Posterior cingulate gyrus (tissue), 11 donors: ENCODE measurements at regions of chrX and their contacts with region 1.

Region 1: GRCh38 chrX:131841496-131842410 is 181.3 kb upstream of the STK26 start:
- DNase-seq: peak in 4 of 10 donors; percentile 3 to 79 (median 14)

Region 2: DNA sequence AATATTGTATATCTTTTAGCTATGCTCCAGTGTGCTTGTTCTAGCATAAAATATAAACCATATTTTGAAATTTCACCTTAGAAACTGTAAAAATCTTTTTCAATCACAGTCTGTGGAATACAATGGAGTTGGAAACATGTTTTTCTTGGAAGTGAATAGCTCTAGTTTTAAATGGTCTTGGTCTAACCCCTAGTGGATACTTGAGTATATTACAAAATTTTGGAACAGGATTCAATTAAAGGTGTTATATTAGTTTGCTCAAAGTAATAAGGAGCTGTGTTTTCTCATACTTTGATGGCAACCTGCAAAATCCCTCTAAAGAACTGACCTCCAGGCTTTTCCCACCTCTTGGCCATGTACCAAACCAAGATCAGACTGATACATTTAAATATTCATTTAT is 229.5 kb after region 1 on chrX:
- intact Hi-C with region 1: loop called (anchors 5 kb)
- DNase-seq: no peak

Region 3: DNA sequence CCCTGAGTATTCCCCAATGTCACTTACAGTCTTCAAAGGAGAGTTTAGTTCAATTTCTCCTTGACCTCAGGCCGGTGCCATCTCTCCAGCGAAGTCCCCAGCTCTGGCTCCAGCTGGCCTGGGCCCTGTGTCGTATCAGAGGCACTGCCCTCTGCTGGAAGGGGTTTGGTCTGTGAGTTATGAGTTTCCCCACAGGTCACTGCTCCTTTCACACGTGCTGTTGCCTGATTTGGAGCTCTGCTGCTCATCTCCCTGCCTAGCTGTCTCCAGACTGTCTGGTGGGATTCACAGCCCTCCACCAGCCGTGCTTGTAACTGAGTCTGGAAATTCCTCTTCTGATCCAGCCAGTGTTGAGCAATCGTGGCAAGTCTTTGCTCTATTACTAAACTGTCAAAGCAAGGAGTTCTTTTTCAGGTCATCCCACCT is 377.6 kb after region 1 on chrX and contains the start of gene RAP2C:
- intact Hi-C with region 1: loop called (anchors 5 kb)
- DNase-seq: peak; percentile 17 to 93 (median 56)

Region 4: GRCh38 chrX:132631579-132632232 is 790.0 kb after region 1 on chrX:
- intact Hi-C with region 1: loop called (anchors 10 kb)
- DNase-seq: no peak